Endothelial cell of umbilical vein (primary cell): ENCODE measurements at regions of chr15 and their contacts with region 1.

Region 1: DNA sequence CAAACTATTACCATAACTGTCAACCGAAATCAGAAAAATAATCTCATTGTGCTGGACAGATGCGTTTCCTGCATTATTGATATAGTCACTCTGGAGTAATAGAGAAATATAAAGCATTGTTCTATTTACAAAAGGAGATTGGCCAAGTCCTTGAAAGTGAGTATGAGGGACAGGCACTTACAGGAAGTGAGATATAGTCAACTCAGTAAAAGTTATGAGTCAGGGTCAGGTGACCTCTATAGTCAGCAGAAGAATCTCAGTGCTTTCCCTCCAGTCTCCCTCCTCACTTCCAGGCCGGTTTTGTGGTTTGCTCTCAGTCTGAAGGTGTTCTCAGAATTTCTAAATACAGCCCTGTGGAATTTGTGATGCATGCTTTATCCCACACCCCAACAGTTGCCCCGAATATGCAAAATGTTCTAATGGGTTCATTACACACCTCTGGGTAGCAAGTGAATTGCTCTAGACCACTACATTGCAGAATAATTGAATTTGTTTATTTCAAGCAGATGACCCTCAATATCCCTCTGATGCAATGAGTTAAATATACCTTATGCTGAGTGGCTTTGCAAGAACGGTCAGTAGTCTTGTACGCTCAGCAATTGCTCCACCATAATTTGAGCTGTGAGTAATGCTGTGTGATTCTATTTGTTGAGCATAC is 787.7 kb downstream of the MCTP2 start:
- DNase-seq: peak; percentile 86
- H3K4me3 ChIP-seq: peak overlapping the region in 1 of 3 experiments; percentile 55
- H3K27ac ChIP-seq: peak overlapping the region; percentile 83
- H3K4me1 ChIP-seq: peaks cover 39% of the 10 kb centered on the region
- H3K27me3 ChIP-seq: no peaks in the 10 kb centered on the region
- CTCF ChIP-seq: no peak
- POLR2A ChIP-seq: no peak

Region 2: GRCh38 chr15:94403331-94403730 is 615.7 kb before region 1 on chr15:
- CTCF ChIA-PET with region 1: no interaction called
- POLR2A ChIA-PET with region 1: no interaction called
- dilution Hi-C with region 1: no loop called
- intact Hi-C with region 1: loop called (anchors 5 kb)
- DNase-seq: peak; percentile 51
- H3K4me3 ChIP-seq: no peak overlapping the region
- H3K27ac ChIP-seq: no peak overlapping the region
- H3K4me1 ChIP-seq: peaks cover 5% of the 10 kb centered on the region
- H3K27me3 ChIP-seq: no peaks in the 10 kb centered on the region
- CTCF ChIP-seq: no peak
- POLR2A ChIP-seq: no peak

Region 3: DNA sequence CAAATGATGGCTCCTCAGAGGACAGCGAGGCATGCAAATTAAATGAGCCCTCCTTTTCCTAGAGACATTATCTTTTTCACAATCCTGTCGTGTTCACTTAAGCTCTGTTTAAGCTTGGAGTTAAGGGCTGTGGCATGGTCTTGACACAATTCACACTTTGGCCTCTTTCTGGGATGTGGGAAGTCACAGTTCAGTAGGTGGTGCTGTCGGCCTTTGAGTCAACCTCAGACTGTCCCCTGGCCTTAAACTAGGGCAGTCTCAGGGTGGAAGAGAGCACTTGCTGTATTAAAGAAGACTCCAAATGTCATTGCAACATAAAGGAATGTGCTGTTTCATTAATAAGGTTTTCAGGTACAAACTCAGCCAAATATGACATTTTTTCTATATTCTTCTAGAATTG is 436.6 kb before region 1 on chr15:
- CTCF ChIA-PET with region 1: interaction called, 79 read pairs
- POLR2A ChIA-PET with region 1: no interaction called
- dilution Hi-C with region 1: no loop called
- intact Hi-C with region 1: loop called (anchors 1 kb)
- DNase-seq: peak; percentile 85
- H3K4me3 ChIP-seq: no peak overlapping the region
- H3K27ac ChIP-seq: no peak overlapping the region
- H3K4me1 ChIP-seq: peaks cover 25% of the 10 kb centered on the region
- H3K27me3 ChIP-seq: no peaks in the 10 kb centered on the region
- CTCF ChIP-seq: peak; percentile 75 to 80
- POLR2A ChIP-seq: no peak

Region 4: GRCh38 chr15:94607176-94607654 is 411.8 kb before region 1 on chr15:
- CTCF ChIA-PET with region 1: interaction called, 11 read pairs
- POLR2A ChIA-PET with region 1: no interaction called
- dilution Hi-C with region 1: no loop called
- intact Hi-C with region 1: loop called (anchors 1 kb)
- DNase-seq: peak; percentile 96
- H3K4me3 ChIP-seq: no peak overlapping the region
- H3K27ac ChIP-seq: peak overlapping the region; percentile 97
- H3K4me1 ChIP-seq: peaks cover 40% of the 10 kb centered on the region
- H3K27me3 ChIP-seq: no peaks in the 10 kb centered on the region
- CTCF ChIP-seq: no peak
- POLR2A ChIP-seq: peak; percentile 75

Region 5: DNA sequence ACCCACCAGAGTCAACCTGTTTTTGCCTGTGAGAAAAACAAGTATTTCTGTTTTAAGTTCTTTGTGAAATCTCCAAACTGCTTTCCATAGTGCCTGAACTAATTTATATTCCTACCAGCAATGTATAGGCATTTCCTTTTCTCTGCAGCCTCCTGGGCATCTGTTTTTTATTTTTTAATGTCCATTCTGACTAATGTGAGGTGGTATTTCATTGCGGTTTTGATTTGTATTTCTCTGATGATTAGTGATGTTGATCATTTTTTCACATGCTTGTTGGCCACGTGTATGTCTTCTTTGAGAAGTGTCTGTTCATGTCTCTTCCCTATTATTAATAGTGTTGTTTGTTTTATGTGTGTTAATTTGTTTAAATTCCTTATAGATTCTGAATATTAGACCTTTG is 32.8 kb after region 1 on chr15:
- CTCF ChIA-PET with region 1: no interaction called
- POLR2A ChIA-PET with region 1: no interaction called
- dilution Hi-C with region 1: no loop called
- intact Hi-C with region 1: no loop called
- DNase-seq: no peak
- H3K4me3 ChIP-seq: no peak overlapping the region
- H3K27ac ChIP-seq: no peak overlapping the region
- H3K4me1 ChIP-seq: no peaks in the 10 kb centered on the region
- H3K27me3 ChIP-seq: no peaks in the 10 kb centered on the region
- CTCF ChIP-seq: no peak
- POLR2A ChIP-seq: no peak

Region 6: DNA sequence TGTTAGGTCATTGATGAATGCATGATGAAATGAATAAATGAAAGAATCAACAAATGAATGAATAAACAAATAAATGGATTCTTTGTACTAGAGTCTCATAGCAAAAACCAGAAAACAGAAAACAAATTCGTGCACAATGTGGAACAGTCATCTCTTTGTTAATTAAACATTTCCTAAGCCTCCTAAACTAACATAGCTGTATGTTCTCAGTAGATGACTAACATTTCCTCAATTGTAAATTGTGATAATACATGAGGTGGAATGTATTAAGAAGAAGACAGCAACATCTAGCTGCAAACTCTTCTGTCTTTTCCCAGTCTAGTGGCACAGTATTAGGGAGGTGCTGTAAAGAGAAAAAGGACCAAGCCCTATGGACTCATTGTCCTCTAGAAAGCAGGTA is 233.4 kb after region 1 on chr15:
- CTCF ChIA-PET with region 1: interaction called, 4 read pairs
- POLR2A ChIA-PET with region 1: no interaction called
- dilution Hi-C with region 1: no loop called
- intact Hi-C with region 1: loop called (anchors 2 kb)
- DNase-seq: peak; percentile 82
- H3K4me3 ChIP-seq: no peak overlapping the region
- H3K27ac ChIP-seq: peak overlapping the region; percentile 59
- H3K4me1 ChIP-seq: peaks cover 32% of the 10 kb centered on the region
- H3K27me3 ChIP-seq: no peaks in the 10 kb centered on the region
- CTCF ChIP-seq: no peak
- POLR2A ChIP-seq: no peak

Region 7: DNA sequence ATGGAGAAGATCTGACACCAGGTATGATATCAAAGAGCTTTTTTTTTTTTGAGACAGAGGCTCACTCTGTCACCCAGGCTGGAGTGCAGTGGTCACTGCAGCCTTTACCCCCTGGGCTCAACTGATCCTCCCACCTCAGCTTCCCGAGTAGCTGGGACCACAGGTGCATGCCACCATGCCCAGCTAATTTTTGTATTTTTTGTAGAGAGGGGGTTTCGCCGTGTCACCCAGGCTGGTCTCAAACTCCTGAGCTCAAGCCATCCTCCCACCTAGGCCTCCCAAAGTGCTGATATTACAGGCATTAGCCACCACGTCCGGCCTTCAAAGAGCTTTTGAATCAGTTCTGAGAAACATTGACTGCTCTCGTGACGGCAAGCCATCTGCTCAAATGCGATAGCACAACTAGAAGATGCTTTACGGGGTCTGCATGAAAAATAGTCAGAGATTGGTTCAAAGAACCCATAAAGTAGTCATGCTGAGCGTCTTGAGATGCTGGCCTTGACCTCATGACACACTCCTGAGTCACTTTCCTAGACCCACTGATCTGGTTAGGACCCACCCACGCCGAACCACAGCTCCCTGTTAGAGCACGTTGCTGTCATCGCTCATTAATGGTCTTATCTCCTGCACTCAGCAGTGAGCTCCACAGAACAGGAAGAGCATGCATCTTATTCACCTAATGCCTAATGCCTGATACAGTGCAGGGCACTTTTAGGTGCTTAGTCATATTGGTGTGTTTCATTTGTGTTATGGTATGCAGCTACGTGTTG is 1254.5 kb after region 1 on chr15:
- CTCF ChIA-PET with region 1: no interaction called
- POLR2A ChIA-PET with region 1: no interaction called
- dilution Hi-C with region 1: no loop called
- intact Hi-C with region 1: loop called (anchors 5 kb)
- DNase-seq: peak; percentile 94
- H3K4me3 ChIP-seq: no peak overlapping the region
- H3K27ac ChIP-seq: peak overlapping the region; percentile 90
- H3K4me1 ChIP-seq: peaks cover 41% of the 10 kb centered on the region
- H3K27me3 ChIP-seq: no peaks in the 10 kb centered on the region
- CTCF ChIP-seq: no peak
- POLR2A ChIP-seq: peak; percentile 84